ENCODE measurements at regions of chrX and their contacts with region 1.

Region 1: GRCh38 chrX:119145241-119145653 is 17.6 kb upstream of the KIAA1210 start:
- DNase-seq: no peak
- ATAC-seq: peak; percentile 16

Region 2: GRCh38 chrX:119222932-119223331 is 77.7 kb after region 1 on chrX:
- intact Hi-C with region 1: loop called (anchors 5 kb)
- DNase-seq: no peak
- ATAC-seq: no peak

Region 3: GRCh38 chrX:119235872-119236622 is 90.8 kb after region 1 on chrX and contains the start of gene PGRMC1:
- intact Hi-C with region 1: no loop called
- DNase-seq: peak; percentile 88
- ATAC-seq: peak; percentile 96
- total RNA-seq, gene PGRMC1: 21.9 TPM

Measured in Right ventricle myocardium inferior (tissue), 1 donor.